A673 (cell line): ENCODE measurements at regions of chr4 and their contacts with region 1.

Region 1: DNA sequence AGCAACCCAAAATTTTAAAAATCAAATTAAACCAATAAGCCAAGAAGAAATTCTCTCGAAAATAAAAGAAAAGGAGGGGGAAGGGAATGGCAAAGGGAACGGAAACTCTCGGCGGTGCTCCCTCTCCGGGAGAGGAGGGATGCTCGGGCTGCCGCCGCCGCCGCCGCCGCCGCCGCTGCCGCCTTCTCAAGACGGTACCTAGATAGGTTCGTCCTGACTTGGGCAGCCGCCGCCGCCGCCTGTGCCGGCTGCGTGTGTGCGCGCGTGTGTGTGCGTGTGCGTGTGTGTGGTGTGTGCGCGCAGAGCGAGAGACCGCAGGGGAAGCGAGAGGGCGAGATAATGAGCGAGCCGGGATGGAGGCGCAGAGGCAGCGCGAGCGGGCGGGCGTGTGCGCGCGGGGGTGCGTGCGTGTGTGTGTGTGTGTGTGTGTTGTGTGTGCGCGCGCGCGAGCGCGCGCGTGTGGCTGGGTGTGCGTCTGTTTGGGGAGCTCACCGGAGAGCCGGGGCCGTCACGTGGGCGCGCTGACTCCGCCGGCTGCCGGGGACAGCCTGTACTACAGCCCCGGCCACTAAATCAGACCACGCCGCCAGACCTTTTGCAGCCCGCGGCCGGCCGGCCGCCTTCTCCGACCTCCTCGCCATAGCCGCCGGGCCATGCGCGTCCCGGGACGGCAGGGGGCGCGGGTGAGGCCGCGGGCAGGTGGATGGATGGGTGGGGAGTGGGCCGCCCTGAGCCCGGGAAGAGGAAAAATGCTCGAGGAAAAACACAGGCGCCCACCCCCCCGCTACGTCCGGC is 111.6 kb downstream of the DHX15 start:
- DNase-seq: peak; percentile 67
- H3K4me3 ChIP-seq: peak overlapping the region; percentile 49
- H3K27ac ChIP-seq: no peak overlapping the region
- H3K4me1 ChIP-seq: peaks cover 15% of the 10 kb centered on the region
- H3K27me3 ChIP-seq: peaks cover 64% of the 10 kb centered on the region
- CTCF ChIP-seq: peak; percentile 59

Region 2: DNA sequence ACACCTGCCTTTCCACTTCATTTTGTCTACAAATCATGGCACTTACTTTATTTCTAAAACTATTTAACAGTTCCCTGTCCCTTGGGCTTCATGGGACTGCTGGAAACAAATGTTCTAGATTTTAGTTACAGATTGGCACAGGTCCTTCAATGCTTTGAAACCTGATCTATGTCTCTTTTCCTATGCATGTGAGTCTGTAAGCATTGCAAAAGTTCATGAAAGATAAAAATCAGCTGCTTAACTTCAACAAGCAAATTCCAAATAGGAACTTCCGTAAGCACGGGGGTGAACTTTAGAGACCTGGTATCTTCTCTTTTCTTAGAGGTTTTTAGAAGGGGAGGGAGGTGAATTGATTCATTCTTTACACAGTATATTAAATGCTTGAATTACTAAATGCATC is 548.5 kb after region 1 on chr4:
- CTCF ChIA-PET with region 1: interaction called, 13 read pairs
- POLR2A ChIA-PET with region 1: no interaction called
- intact Hi-C with region 1: no loop called
- DNase-seq: peak; percentile 23
- H3K4me3 ChIP-seq: no peak overlapping the region
- H3K27ac ChIP-seq: no peak overlapping the region
- H3K4me1 ChIP-seq: no peaks in the 10 kb centered on the region
- H3K27me3 ChIP-seq: peaks cover 13% of the 10 kb centered on the region
- CTCF ChIP-seq: no peak